Activated T-helper 1 cell treated with anti-CD3 and anti-CD28 coated beads, Interleukin-12 subunit alpha, Interleukin-12 subunit beta, Interleukin-2, Interleukin-4 antibody, amounts not matched to agents 30 ng/mL and 10 ng/mL and 1 ng/mL, durations not matched to agents 14 hours and 24 hours and 36 hours (primary cell): ENCODE measurements at regions of chr19 and their contacts with region 1.

Region 1: DNA sequence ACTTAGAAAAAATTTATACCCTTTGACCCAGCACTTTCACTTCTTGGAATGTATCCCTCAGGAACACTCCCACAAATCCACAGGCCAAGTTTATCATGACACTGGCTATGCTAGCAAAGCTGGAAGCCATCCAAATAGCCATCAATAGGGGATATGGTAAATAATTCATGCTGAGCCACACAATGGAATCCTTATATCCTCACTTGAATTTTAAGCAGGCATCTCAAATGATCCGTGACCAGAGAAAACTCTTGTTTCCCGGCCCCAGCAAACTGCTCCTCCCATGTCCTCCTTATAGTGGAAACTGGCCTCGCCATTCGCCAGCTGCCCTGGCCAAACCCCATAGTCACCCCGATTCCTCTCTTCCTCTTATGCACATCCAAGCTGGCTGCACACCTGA is 37.6 kb downstream of the GRIK5 start:
- DNase-seq: no peak
- H3K4me3 Mint-ChIP-seq: no peak overlapping the region
- H3K27ac Mint-ChIP-seq: no peak overlapping the region
- H3K4me1 Mint-ChIP-seq: peaks cover 8% of the 10 kb centered on the region
- H3K27me3 Mint-ChIP-seq: peaks cover 9% of the 10 kb centered on the region

Region 2: GRCh38 chr19:41997121-41997850 is 35.1 kb before region 1 on chr19:
- intact Hi-C with region 1: loop called (anchors 2 kb)
- DNase-seq: peak; percentile 12
- H3K4me3 Mint-ChIP-seq: no peak overlapping the region
- H3K27ac Mint-ChIP-seq: no peak overlapping the region
- H3K4me1 Mint-ChIP-seq: peaks cover 28% of the 10 kb centered on the region
- H3K27me3 Mint-ChIP-seq: peaks cover 58% of the 10 kb centered on the region

Region 3: DNA sequence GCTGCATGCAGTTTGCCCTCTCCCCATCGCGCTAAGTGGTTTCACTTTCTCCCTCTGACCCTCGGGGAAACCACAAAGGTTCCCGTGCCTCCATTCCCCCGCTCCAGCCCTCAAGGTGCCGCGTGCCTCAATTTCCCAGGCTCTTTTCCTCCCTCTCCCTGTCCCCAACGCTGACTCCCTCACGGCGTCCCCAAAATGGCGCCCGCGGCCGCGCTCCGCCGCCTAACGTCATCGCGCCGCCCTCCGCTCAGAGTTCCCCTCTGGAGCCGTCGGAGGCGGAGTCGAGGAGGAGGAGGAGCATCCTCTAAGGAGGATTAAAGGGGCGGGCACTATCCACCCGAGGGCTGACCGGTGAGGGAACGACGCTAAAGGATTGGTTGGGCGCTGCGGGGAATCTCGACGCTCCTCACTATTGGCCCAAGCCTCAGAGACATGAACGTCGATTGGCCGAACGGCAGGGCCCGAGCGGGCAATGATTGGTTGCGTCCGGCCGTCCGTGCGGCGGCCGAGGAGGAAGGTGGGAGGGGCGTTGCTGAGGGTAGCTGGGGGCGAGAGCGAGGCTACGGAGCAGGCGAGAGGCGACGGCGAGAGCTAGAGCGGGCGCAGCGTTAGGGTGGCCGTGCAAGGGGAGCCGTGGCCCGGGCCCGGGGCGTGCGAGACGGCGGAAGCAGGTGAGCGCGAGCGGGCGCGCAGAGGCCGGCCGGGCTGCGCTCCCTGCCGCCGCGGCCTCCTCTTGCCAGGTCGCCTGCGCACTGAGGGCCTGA is 43.4 kb after region 1 on chr19 and contains the start of gene ZNF574:
- intact Hi-C with region 1: loop called (anchors 2 kb)
- DNase-seq: peak; percentile 97
- H3K4me3 Mint-ChIP-seq: peak within 1 kb of the TSS; percentile 97
- H3K27ac Mint-ChIP-seq: peak within 1 kb of the TSS; percentile 99
- H3K4me1 Mint-ChIP-seq: peaks cover 37% of the 10 kb centered on the region
- H3K27me3 Mint-ChIP-seq: peaks cover 1% of the 10 kb centered on the region
- total RNA-seq, gene ZNF574: 17.5 and 17.8 TPM in 2 replicates